CD4-positive, alpha-beta memory T cell (primary cell): ENCODE measurements at regions of chr1 and their contacts with region 1.

Region 1: DNA sequence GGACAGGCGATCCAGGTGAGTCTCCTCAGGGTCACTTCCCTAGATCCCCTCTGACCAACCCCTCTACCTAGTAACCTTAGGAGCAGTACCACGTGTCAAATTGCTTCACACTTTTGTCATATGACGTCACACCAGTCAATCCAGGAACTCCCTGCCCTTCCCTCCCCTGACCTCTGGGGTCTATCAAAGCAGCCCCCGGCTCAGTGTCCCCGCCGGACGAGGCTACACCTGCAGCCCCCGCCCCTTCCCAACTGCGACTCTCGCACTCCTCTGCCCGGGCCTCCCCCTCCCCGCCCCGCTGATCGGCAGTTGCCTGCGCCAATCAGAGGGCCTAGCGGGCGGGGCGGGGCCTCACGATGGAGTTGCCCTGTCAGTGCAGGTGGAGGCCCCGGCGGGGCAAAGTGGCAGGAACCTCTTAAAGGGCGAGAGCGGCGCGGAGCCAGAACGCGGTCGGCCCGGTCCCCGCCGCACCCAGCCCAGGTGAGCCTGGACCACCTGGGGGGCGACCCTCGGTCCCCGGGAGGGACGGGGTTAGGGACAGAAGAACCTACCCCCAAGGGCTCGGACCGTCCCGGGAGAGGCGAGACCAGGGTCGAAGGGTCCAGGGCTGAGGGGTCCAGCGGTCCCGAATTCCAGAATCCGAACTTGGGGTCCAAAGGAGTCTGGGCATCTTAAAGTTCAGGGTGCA is 27.5 kb upstream of the EPB41 start:
- DNase-seq: peak; percentile 90 to 94 (median 92)
- H3K4me3 ChIP-seq: peak overlapping the region; percentile 39 to 95
- H3K4me3 Mint-ChIP-seq: peak overlapping the region; percentile 84 to 96 (median 89)
- H3K27ac ChIP-seq: peak overlapping the region; percentile 88
- H3K27ac Mint-ChIP-seq: peak overlapping the region; percentile 93 to 100 (median 98)
- H3K4me1 ChIP-seq: peaks cover 64% of the 10 kb centered on the region
- H3K4me1 Mint-ChIP-seq: peaks cover 45 to 71% (median 61%) of the 10 kb centered on the region in 4 donors
- H3K27me3 ChIP-seq: no peaks in the 10 kb centered on the region
- H3K27me3 Mint-ChIP-seq: peaks cover 0 to 4% of the 10 kb centered on the region in 2 donors

Region 2: DNA sequence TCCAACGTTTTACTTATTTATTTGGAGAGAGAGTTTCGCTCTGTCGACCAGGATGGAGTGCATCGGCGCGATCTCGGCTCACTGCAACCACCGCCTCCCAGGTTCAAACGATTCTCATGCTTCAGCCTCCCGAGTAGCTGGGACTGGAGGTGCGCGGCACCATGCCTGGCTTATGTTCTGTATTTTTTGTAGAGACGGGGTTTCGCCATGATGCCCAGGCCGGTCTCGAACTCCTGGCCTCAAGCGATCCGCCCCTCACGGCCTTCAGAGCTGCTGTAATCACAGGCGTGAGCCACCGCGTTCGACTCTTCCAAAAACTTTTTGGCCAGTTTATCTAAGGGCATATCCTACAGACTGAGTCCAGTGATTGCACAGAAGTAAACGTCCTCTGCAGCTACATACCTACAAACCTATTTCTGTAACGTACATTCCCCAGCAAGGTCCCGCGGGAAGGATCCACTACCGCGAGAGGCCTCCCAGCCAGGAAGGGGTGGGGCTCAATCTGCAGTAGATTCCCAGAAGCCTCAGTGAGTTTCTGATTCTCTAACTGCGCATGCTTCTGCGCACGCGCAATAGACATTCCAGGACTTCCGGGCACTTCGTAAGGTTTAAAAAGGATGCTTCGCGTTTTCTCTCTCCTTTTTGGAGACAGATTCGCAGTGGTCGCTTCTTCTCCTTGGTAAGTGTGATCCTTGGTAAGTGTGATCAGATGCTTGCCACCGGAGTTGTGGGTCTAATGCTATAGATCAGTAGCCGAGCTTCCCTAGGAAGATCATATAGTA is 381.3 kb before region 1 on chr1 and contains the start of gene RCC1:
- CTCF ChIA-PET with region 1: no interaction called
- POLR2A ChIA-PET with region 1: interaction called, 6 read pairs
- intact Hi-C with region 1: loop called (anchors 5 kb)
- DNase-seq: peak; percentile 94 to 98 (median 97)
- H3K4me3 ChIP-seq: peak within 1 kb of the TSS; percentile 76 to 96
- H3K4me3 Mint-ChIP-seq: peak within 1 kb of the TSS; percentile 94 to 100 (median 98)
- H3K27ac ChIP-seq: peak within 1 kb of the TSS; percentile 66
- H3K27ac Mint-ChIP-seq: peak within 1 kb of the TSS; percentile 96 to 99 (median 98)
- H3K4me1 ChIP-seq: peaks cover 37% of the 10 kb centered on the region
- H3K4me1 Mint-ChIP-seq: peaks cover 29 to 53% (median 38%) of the 10 kb centered on the region in 4 donors
- H3K27me3 ChIP-seq: no peaks in the 10 kb centered on the region
- H3K27me3 Mint-ChIP-seq: no peaks in the 10 kb centered on the region
- total RNA-seq, gene RCC1: 16.7 to 18.4 TPM

Region 3: GRCh38 chr1:28792644-28793121 is 94.2 kb before region 1 on chr1:
- CTCF ChIA-PET with region 1: no interaction called
- POLR2A ChIA-PET with region 1: no interaction called
- intact Hi-C with region 1: no loop called
- DNase-seq: no peak
- H3K4me3 ChIP-seq: no peak overlapping the region
- H3K4me3 Mint-ChIP-seq: no peak overlapping the region
- H3K27ac ChIP-seq: no peak overlapping the region
- H3K27ac Mint-ChIP-seq: no peak overlapping the region
- H3K4me1 ChIP-seq: no peaks in the 10 kb centered on the region
- H3K4me1 Mint-ChIP-seq: peaks cover 0 to 2% (median 0%) of the 10 kb centered on the region in 4 donors
- H3K27me3 ChIP-seq: no peaks in the 10 kb centered on the region
- H3K27me3 Mint-ChIP-seq: peaks cover 4 to 8% of the 10 kb centered on the region in 2 donors

Region 4: GRCh38 chr1:28860332-28861073 is 26.4 kb before region 1 on chr1:
- CTCF ChIA-PET with region 1: no interaction called
- POLR2A ChIA-PET with region 1: no interaction called
- intact Hi-C with region 1: no loop called
- DNase-seq: no peak
- H3K4me3 ChIP-seq: no peak overlapping the region
- H3K4me3 Mint-ChIP-seq: no peak overlapping the region
- H3K27ac ChIP-seq: no peak overlapping the region
- H3K27ac Mint-ChIP-seq: no peak overlapping the region
- H3K4me1 ChIP-seq: no peaks in the 10 kb centered on the region
- H3K4me1 Mint-ChIP-seq: no peaks in the 10 kb centered on the region
- H3K27me3 ChIP-seq: no peaks in the 10 kb centered on the region
- H3K27me3 Mint-ChIP-seq: peaks cover 0 to 3% of the 10 kb centered on the region in 2 donors

Region 5: DNA sequence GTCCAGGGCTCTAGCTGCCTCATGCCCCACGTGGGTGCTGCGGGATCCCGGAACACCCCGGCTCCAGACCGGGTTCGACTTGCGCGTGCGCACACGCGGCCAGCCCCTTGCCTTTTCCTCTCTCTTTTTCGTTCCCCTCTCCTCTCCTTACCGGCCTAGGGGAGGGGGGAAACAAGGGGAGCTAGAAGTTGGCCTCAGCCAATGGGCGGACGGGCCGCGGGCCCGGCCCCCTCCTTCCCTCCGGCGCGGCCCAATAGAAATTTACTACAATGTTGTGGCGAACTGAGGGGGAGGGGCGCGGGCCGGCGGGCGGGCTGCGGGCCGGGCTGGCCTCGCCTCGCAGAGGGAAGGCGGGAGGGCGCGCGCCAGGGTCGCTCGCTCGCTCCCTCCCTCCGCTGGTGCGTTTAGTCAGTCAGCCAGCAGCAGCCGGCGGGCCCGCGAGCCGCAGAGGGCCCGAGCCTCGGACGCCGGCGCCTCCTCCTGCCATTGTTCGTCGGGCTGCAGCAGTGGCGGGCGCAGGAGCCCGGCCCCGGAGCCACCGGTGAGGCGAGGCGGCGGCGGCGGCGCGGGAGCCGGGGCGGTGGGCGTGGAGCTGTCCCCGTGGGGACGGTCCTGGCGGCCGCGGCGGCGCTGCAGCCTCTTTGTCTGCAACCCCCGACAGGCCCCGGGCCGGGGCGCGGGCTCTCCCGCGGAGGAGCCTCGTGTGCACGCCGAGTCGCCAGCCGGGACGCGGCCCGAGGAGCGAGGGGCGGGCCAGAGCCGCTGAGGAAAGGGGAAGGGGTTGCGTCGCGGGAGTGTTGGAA is 27.6 kb after region 1 on chr1 and contains the start of gene EPB41:
- CTCF ChIA-PET with region 1: interaction called, 9 read pairs
- POLR2A ChIA-PET with region 1: interaction called, 33 read pairs
- intact Hi-C with region 1: loop called (anchors 1 kb)
- DNase-seq: peak; percentile 87 to 91 (median 87)
- H3K4me3 ChIP-seq: peak within 1 kb of the TSS; percentile 83 to 90
- H3K4me3 Mint-ChIP-seq: peak within 1 kb of the TSS; percentile 98 to 99 (median 99)
- H3K27ac ChIP-seq: peak within 1 kb of the TSS; percentile 65
- H3K27ac Mint-ChIP-seq: peak within 1 kb of the TSS; percentile 93 to 98 (median 96)
- H3K4me1 ChIP-seq: peaks cover 50% of the 10 kb centered on the region
- H3K4me1 Mint-ChIP-seq: peaks cover 34 to 55% (median 40%) of the 10 kb centered on the region in 4 donors
- H3K27me3 ChIP-seq: no peaks in the 10 kb centered on the region
- H3K27me3 Mint-ChIP-seq: no peaks in the 10 kb centered on the region
- total RNA-seq, gene EPB41: 320 to 321 TPM

Region 6: DNA sequence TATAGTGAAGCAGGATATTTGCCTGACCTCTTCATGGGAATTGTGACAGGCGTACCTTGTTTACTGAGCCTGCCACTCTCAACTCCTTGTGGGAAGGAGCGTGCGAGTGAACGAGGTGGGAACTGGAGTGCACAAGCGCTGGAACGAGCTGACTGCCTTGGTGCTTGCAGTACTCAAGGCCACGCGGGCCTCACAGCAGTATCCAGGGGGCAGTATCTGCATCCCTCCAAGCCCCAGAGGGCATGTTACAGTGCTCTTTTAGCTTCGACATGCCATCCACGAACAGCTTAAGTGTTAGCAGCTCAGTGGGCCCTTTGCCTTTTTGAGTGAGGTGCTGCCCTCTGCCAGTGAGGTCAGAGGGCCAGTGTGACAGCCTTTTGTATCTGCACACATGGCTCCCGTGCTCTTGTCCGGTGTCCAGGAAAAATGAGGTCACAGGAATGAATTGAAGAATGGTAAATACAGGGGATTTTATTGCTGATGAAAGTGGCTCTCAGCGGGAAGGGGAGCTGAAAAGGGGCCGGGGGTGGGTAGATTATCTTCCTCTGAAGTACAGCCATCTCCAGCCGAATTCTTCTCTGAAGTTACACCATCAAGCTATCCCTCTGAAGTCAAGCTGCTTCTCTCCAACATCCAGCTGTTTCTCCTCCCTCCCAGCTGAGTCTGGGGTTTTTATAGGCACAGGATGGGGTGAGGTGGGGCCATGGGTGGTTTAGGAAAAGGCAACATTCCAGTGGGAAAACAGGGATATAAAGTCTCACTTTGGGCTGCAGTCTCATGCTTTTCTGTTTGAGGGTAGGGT is 96.8 kb after region 1 on chr1:
- CTCF ChIA-PET with region 1: interaction called, 12 read pairs
- POLR2A ChIA-PET with region 1: interaction called, 4 read pairs
- intact Hi-C with region 1: loop called (anchors 5 kb)
- DNase-seq: no peak
- H3K4me3 ChIP-seq: no peak overlapping the region
- H3K4me3 Mint-ChIP-seq: peak overlapping the region in 1 of 8 donors; percentile 4
- H3K27ac ChIP-seq: no peak overlapping the region
- H3K27ac Mint-ChIP-seq: peak overlapping the region in 4 of 7 donors; percentile 11 to 29 (median 16)
- H3K4me1 ChIP-seq: peaks cover 45% of the 10 kb centered on the region
- H3K4me1 Mint-ChIP-seq: peaks cover 38 to 74% (median 56%) of the 10 kb centered on the region in 4 donors
- H3K27me3 ChIP-seq: no peaks in the 10 kb centered on the region
- H3K27me3 Mint-ChIP-seq: no peaks in the 10 kb centered on the region

Region 7: DNA sequence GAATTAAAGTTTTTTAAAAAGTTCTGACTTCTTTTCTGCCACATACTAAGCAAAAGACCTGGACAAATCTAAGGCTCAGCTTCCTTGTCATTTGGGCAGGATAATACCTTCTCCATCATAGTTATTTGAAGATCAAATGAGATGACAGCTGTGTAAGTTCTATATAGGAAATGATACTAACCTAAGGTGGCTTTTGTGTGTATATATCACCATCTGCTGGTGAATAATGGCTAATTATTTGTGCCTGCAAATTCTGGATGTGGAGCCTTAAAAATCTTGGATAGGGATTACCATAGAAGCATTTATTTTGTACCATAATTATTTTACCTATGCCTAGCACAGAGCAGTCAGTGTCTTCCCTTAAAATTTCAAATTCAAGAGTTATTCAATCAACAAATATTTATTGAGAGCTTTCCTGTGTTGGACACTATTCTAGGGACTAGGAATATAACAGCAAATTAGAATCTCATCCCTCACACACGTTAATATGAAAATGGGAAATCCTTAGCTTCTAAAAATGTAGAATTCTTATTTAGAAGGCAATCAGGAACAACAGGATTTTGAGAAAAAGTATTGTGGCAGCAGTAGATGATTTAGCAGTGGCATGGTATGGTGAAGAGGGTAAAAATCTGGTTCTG is 147.1 kb after region 1 on chr1:
- CTCF ChIA-PET with region 1: interaction called, 294 read pairs
- POLR2A ChIA-PET with region 1: interaction called, 24 read pairs
- intact Hi-C with region 1: loop called (anchors 1 kb)
- DNase-seq: peak in 4 of 5 donors; percentile 34 to 48 (median 42)
- H3K4me3 ChIP-seq: no peak overlapping the region
- H3K4me3 Mint-ChIP-seq: no peak overlapping the region
- H3K27ac ChIP-seq: no peak overlapping the region
- H3K27ac Mint-ChIP-seq: peak overlapping the region in 1 of 7 donors; percentile 92
- H3K4me1 ChIP-seq: no peaks in the 10 kb centered on the region
- H3K4me1 Mint-ChIP-seq: peaks cover 0 to 4% (median 0%) of the 10 kb centered on the region in 4 donors
- H3K27me3 ChIP-seq: no peaks in the 10 kb centered on the region
- H3K27me3 Mint-ChIP-seq: no peaks in the 10 kb centered on the region

Region 8: DNA sequence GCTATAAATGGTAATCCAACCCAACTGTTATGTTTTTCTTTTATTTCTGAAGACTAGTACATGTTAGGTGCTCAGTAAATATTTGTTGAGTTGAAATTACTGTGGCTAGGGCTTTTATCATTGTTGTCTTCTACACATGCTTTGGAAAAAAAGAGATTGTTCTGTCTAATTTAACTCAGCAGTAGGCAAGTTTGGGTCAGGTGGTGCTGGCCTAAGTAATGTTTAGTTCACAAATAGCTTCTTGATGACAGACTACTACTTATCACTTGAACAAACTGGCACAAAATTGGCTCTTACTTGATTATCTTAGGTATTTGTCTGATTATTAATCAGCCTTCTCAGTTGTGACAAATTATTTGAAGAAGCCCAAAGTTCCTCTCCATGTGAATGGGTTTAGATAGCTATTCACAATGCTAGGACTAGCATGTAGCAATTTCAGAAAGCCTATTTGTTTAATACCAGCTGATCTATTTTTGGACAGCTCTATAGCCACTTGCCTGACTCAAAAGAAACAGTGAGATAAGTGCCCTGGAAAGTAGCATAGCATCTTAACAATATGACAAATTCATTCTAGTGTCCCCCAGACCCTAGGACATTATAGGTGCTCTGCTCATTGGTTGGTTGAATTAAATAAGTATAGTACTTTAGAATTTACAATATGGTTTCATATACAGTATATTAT is 204.2 kb after region 1 on chr1:
- CTCF ChIA-PET with region 1: no interaction called
- POLR2A ChIA-PET with region 1: no interaction called
- intact Hi-C with region 1: no loop called
- DNase-seq: no peak
- H3K4me3 ChIP-seq: no peak overlapping the region
- H3K4me3 Mint-ChIP-seq: no peak overlapping the region
- H3K27ac ChIP-seq: no peak overlapping the region
- H3K27ac Mint-ChIP-seq: peak overlapping the region in 2 of 7 donors; percentile 12 to 71
- H3K4me1 ChIP-seq: no peaks in the 10 kb centered on the region
- H3K4me1 Mint-ChIP-seq: peaks cover 0 to 6% (median 2%) of the 10 kb centered on the region in 4 donors
- H3K27me3 ChIP-seq: no peaks in the 10 kb centered on the region
- H3K27me3 Mint-ChIP-seq: no peaks in the 10 kb centered on the region

Region 9: DNA sequence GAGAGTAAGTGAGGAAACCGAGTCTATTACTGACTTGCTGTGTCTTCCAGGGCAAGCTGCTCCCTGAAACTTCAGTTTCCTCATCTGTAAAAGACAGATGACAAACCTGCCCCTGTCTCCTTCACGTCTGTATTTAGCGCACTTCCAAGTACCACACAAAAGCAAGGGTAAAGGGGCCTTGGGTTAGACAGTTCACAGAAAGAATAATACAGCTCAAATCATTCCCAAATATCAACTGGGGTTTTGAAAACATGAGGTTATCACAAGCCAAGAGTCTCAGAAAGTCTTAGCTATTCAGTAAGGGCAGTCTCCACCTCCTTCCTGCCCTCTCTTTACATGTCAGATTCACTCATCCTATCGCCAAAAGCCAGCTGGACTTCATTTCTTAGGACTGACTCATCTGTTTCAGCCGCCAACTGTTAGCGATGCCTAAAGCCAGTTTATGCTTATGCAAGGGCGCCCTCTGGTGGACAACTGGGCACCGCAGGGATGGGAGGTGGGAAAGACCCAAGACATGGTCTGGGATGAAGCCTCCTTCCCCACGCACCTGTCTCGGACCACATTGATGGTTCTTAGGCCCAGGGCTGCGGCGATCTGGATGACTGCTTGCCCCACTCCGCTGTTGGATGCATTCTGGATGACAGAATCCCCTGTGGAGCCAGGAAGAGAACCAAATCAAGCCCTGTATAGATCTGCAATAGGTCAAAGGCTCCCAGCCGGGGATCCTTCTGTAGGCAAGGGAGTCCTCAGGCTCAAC is 315.9 kb after region 1 on chr1:
- CTCF ChIA-PET with region 1: interaction called, 133 read pairs
- POLR2A ChIA-PET with region 1: interaction called, 4 read pairs
- intact Hi-C with region 1: loop called (anchors 1 kb)
- DNase-seq: peak; percentile 73 to 81 (median 76)
- H3K4me3 ChIP-seq: no peak overlapping the region
- H3K4me3 Mint-ChIP-seq: no peak overlapping the region
- H3K27ac ChIP-seq: no peak overlapping the region
- H3K27ac Mint-ChIP-seq: peak overlapping the region in 2 of 7 donors; percentile 12 to 24
- H3K4me1 ChIP-seq: no peaks in the 10 kb centered on the region
- H3K4me1 Mint-ChIP-seq: peaks cover 0 to 7% (median 2%) of the 10 kb centered on the region in 4 donors
- H3K27me3 ChIP-seq: no peaks in the 10 kb centered on the region
- H3K27me3 Mint-ChIP-seq: no peaks in the 10 kb centered on the region